Aorta (tissue), 5 donors: ENCODE measurements at regions of chr11 and their contacts with region 1.

Region 1: GRCh38 chr11:89490981-89491690 is at the start of gene NOX4:
- DNase-seq: peak; percentile 86 to 87
- ATAC-seq: peak; percentile 89
- H3K4me3 ChIP-seq: peak within 1 kb of the TSS; percentile 81 to 88
- H3K27ac ChIP-seq: peak within 1 kb of the TSS; percentile 76 to 98
- H3K4me1 ChIP-seq: no peaks in the 10 kb centered on the region
- H3K27me3 ChIP-seq: no peaks in the 10 kb centered on the region
- total RNA-seq, gene NOX4: 46.1 to 91.9 TPM

Region 2: DNA sequence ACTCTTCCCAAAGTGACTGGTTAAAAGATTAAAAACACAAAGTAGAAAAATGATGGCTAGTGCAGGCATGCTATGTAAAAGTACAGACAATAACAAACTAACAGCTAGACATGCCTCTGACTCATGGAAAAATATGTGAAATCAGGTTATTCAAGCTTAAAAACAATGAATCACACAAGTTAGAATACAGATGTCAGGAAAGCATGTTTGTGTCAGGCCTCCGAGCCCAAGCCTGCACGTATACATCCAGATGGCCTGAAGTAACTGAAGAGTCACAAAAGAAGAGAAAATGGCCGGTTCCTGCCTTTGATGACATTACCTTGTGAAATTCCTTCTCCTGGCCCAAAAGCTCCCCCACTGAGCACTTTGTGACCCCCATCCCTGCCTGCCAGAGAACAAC is 110.0 kb before region 1 on chr11:
- intact Hi-C with region 1: loop called in 1 of 2 experiments (anchors 5 kb)
- DNase-seq: peak; percentile 74 to 76
- ATAC-seq: peak; percentile 89
- H3K4me3 ChIP-seq: no peak overlapping the region
- H3K27ac ChIP-seq: peak overlapping the region; percentile 93 to 98
- H3K4me1 ChIP-seq: peaks cover 0 to 4% of the 10 kb centered on the region in 2 donors
- H3K27me3 ChIP-seq: no peaks in the 10 kb centered on the region

Region 3: DNA sequence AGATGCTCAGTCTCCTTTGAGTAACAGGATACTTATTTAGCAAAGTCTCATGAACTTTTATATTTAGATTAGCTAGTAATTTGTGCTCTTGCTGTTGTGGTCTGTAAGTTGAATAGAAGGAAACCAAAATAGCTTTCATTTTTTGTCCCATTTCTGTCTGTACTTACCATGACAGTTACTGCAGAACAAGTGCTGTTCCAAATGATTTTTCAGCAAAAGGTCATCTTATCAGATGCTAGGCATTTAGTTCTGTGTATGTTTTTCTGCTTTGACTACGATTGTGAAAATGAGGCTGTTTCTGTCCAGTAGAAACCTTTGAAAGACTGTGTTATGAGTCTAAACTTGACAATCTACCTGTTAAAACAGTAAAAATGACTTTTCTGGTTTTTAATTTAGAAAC is 53.8 kb after region 1 on chr11:
- intact Hi-C with region 1: loop called in 1 of 2 experiments (anchors 5 kb)
- DNase-seq: no peak
- ATAC-seq: no peak
- H3K4me3 ChIP-seq: peak overlapping the region in 1 of 2 donors; percentile 41
- H3K27ac ChIP-seq: no peak overlapping the region
- H3K4me1 ChIP-seq: peaks cover 0 to 2% of the 10 kb centered on the region in 2 donors
- H3K27me3 ChIP-seq: no peaks in the 10 kb centered on the region

Region 4: DNA sequence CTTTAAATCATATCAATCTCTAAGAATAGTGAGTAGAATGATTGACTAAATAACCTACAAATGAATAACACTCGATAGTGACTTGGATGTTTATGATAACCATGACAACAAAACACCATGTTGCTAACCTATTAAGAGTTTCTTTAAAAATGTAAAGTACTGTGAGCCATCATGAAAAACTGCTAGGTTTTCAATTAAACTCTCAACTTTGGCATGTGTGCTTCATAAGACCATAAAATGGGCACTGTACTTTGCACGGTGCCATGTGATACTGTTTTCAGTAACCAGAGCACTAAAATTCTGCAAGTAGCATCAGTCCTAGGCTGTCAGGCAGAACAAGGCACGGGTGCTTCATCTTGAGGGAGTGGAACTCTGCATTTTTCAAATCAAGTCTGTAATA is 122.8 kb after region 1 on chr11:
- intact Hi-C with region 1: loop called in 1 of 2 experiments (anchors 10 kb)
- DNase-seq: no peak
- ATAC-seq: no peak
- H3K4me3 ChIP-seq: no peak overlapping the region
- H3K27ac ChIP-seq: no peak overlapping the region
- H3K4me1 ChIP-seq: no peaks in the 10 kb centered on the region
- H3K27me3 ChIP-seq: no peaks in the 10 kb centered on the region